Activated T-helper 1 cell treated with anti-CD3 and anti-CD28 coated beads, Interleukin-12 subunit alpha, Interleukin-12 subunit beta, Interleukin-2, Interleukin-4 antibody, amounts not matched to agents 30 ng/mL and 10 ng/mL and 1 ng/mL, durations not matched to agents 14 hours and 24 hours and 36 hours (primary cell): ENCODE measurements at regions of chr1 and their contacts with region 1.

Region 1: GRCh38 chr1:66374561-66375111 is 159.3 kb upstream of the SGIP1 start:
- DNase-seq: peak; percentile 19
- H3K4me3 Mint-ChIP-seq: peak overlapping the region; percentile 77
- H3K27ac Mint-ChIP-seq: peak overlapping the region; percentile 96
- H3K4me1 Mint-ChIP-seq: peaks cover 69% of the 10 kb centered on the region
- H3K27me3 Mint-ChIP-seq: no peaks in the 10 kb centered on the region

Region 2: GRCh38 chr1:66258404-66259105 is 116.1 kb before region 1 on chr1:
- intact Hi-C with region 1: loop called (anchors 1 kb)
- DNase-seq: no peak
- H3K4me3 Mint-ChIP-seq: no peak overlapping the region
- H3K27ac Mint-ChIP-seq: peak overlapping the region; percentile 53
- H3K4me1 Mint-ChIP-seq: peaks cover 83% of the 10 kb centered on the region
- H3K27me3 Mint-ChIP-seq: peaks cover 2% of the 10 kb centered on the region

Region 3: DNA sequence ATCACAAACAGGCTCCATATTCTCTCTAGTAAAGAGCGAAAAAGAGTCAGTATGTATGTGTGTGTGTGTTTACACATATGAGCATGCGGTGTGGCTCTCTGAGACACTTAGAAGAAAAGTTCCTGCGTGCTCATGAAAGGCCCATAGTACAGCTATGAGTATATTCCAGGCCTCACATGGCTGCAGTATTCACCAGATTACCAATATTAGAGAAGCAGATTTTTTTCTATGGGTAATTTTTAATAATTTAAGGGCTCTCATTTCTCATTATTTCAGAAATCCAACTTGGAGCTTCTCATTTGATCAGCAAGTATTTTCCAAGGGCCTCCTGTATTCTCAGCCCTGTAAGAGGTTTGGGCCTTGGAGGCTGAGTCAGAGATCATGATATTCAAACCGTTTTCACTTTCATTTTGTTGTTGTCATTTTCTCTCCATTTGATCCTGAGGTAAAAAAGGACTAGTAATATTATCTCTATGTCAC is 73.6 kb before region 1 on chr1:
- intact Hi-C with region 1: loop called (anchors 1 kb)
- DNase-seq: peak; percentile 48
- H3K4me3 Mint-ChIP-seq: peak overlapping the region; percentile 80
- H3K27ac Mint-ChIP-seq: peak overlapping the region; percentile 94
- H3K4me1 Mint-ChIP-seq: peaks cover 47% of the 10 kb centered on the region
- H3K27me3 Mint-ChIP-seq: no peaks in the 10 kb centered on the region

Region 4: DNA sequence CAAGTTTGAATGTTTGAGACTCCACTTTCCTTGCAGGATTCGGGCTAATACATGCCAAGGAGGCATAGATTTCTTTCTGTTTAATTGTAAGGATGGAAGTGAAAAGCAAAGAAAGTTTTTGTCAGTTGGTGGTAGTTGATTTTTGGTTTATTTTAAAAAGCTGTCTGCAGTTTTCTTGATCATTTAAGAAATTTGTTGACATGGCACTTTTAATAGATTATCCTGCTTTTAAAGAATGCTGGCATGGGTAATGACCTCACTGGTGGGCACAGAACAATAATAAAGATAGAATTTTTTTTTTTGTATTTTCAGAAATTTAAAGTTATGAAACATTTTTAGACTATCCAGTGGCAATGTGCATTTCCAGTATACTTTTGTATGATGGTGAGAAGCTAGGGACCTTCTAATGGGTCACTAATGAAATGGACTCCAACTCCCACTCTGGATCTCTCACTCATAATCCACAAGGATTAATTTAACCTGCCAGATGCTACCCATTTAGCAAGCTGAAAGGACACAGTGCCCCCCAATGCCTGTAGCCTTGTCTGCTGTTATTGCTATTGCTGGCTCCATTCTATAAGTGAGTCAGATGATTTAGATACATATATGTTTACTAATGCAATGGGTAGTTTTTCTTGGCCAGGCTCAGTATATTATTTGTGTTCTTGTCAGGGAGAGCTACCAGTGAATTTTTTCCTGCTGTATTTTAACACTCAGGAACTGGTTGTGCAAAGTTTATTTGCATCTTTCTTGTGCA is 30.9 kb before region 1 on chr1:
- intact Hi-C with region 1: no loop called
- DNase-seq: no peak
- H3K4me3 Mint-ChIP-seq: no peak overlapping the region
- H3K27ac Mint-ChIP-seq: peak overlapping the region; percentile 87
- H3K4me1 Mint-ChIP-seq: peaks cover 75% of the 10 kb centered on the region
- H3K27me3 Mint-ChIP-seq: no peaks in the 10 kb centered on the region

Region 5: DNA sequence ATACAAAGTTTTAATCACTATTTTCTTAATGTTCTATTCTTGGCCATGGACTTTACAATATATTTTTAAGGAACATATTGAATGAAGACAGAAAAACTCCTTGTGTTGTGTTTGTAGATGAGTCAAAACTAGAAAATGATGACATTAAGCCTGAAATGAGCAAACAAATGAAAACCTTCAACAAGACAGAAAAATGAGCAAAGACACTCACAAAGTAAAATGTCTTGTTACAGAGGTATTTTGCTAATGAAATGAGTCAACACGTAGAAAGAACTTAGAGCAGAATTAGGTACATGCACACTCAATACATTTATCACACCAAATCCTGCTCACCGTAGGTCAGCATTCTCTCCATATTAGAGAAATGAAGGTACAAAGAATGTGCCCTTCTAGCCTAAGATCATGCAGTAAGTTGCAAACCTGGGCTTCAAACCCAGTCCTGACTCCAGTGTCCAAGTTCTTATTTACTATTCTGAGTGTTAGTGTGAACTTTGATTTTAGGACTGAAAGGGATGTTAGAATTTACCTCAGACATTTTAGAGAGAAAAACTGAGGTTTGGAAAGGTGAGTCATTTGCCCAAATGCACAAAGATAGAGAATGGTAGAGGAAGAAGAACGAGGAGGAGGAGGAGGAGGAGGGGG is 25.4 kb after region 1 on chr1:
- intact Hi-C with region 1: loop called (anchors 1 kb)
- DNase-seq: no peak
- H3K4me3 Mint-ChIP-seq: peak overlapping the region; percentile 67
- H3K27ac Mint-ChIP-seq: peak overlapping the region; percentile 88
- H3K4me1 Mint-ChIP-seq: peaks cover 47% of the 10 kb centered on the region
- H3K27me3 Mint-ChIP-seq: no peaks in the 10 kb centered on the region

Region 6: GRCh38 chr1:66446261-66447001 is 71.8 kb after region 1 on chr1:
- intact Hi-C with region 1: loop called (anchors 1 kb)
- DNase-seq: peak; percentile 39
- H3K4me3 Mint-ChIP-seq: peak overlapping the region; percentile 56
- H3K27ac Mint-ChIP-seq: peak overlapping the region; percentile 95
- H3K4me1 Mint-ChIP-seq: peaks cover 32% of the 10 kb centered on the region
- H3K27me3 Mint-ChIP-seq: peaks cover 3% of the 10 kb centered on the region

Region 7: GRCh38 chr1:66778266-66778665 is 403.6 kb after region 1 on chr1:
- intact Hi-C with region 1: no loop called
- DNase-seq: no peak
- H3K4me3 Mint-ChIP-seq: no peak overlapping the region
- H3K27ac Mint-ChIP-seq: no peak overlapping the region
- H3K4me1 Mint-ChIP-seq: peaks cover 7% of the 10 kb centered on the region
- H3K27me3 Mint-ChIP-seq: peaks cover 14% of the 10 kb centered on the region